ENCODE measurements at regions of chr14 and their contacts with region 1.

Region 1: GRCh38 chr14:59964251-59965007 is 44.5 kb downstream of the LRRC9 start:
- DNase-seq: no peak
- H3K4me3 ChIP-seq: peak overlapping the region; percentile 53 to 57; a peak in 2 of 4 replicates
- H3K27ac ChIP-seq: no peak overlapping the region
- H3K4me1 ChIP-seq: no peaks in the 10 kb centered on the region
- H3K27me3 ChIP-seq: no peaks in the 10 kb centered on the region
- CTCF ChIP-seq: no peak
- EP300 ChIP-seq: no peak
- RAD21 ChIP-seq: no peak

Region 2: DNA sequence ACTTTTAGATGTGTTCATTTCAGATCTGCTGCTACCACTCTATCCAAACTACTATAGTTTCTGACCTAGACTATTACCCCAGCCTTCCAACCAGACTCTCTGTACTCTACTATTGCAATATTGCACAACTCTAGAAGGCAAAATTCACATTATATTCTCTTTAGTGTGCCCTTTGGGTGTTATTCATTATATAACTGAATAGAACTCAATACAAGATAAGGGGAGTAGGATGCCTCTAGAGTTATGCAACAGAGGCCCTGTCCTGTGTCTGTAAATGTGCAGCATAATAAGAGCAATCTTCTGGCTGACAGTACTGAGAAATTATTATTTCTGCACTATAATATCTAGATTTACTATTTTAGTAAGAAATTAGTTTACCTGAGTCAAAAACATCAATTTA is 18.6 kb after region 1 on chr14:
- CTCF ChIA-PET with region 1: interaction called, 12 read pairs
- POLR2A ChIA-PET with region 1: no interaction called
- DNase-seq: no peak
- H3K4me3 ChIP-seq: no peak overlapping the region
- H3K27ac ChIP-seq: no peak overlapping the region
- H3K4me1 ChIP-seq: no peaks in the 10 kb centered on the region
- H3K27me3 ChIP-seq: no peaks in the 10 kb centered on the region
- CTCF ChIP-seq: no peak
- EP300 ChIP-seq: no peak
- RAD21 ChIP-seq: no peak

Region 3: DNA sequence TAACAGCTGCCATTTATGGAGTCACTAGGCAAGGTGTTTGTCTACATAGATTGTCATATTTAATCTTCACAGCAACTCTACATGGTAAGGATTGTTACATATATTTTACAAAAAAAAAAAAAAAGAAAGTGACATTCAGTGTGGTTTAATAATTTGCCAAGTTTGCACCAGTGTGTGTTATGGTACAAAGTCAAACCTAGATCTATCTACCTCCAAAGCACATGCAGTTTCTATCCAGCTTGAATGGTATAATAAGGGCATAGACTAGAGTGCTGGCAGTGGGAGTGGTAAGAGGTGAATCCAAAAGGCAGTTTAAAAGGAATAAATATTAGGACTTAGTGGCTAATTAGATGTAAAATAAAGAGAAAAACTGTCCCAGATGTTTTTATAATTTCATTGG is 61.1 kb after region 1 on chr14:
- CTCF ChIA-PET with region 1: no interaction called
- POLR2A ChIA-PET with region 1: no interaction called
- DNase-seq: no peak
- H3K4me3 ChIP-seq: no peak overlapping the region
- H3K27ac ChIP-seq: no peak overlapping the region
- H3K4me1 ChIP-seq: no peaks in the 10 kb centered on the region
- H3K27me3 ChIP-seq: no peaks in the 10 kb centered on the region
- CTCF ChIP-seq: no peak
- EP300 ChIP-seq: no peak
- RAD21 ChIP-seq: no peak

Region 4: GRCh38 chr14:60184146-60184904 is 219.9 kb after region 1 on chr14:
- CTCF ChIA-PET with region 1: interaction called, 110 read pairs
- POLR2A ChIA-PET with region 1: no interaction called
- DNase-seq: no peak
- H3K4me3 ChIP-seq: peak overlapping the region; percentile 40 to 61
- H3K27ac ChIP-seq: peak overlapping the region in 1 of 2 experiments; percentile 68; a peak in 2 of 4 replicates
- H3K4me1 ChIP-seq: peaks cover 6 to 8% of the 10 kb centered on the region in 2 experiments; a peak in 2 of 4 replicates
- H3K27me3 ChIP-seq: no peaks in the 10 kb centered on the region
- CTCF ChIP-seq: peak; percentile 90
- EP300 ChIP-seq: no peak
- RAD21 ChIP-seq: peak; percentile 93

Region 5: GRCh38 chr14:60199321-60199720 is 234.9 kb after region 1 on chr14:
- CTCF ChIA-PET with region 1: interaction called, 12 read pairs
- POLR2A ChIA-PET with region 1: no interaction called
- DNase-seq: no peak
- H3K4me3 ChIP-seq: no peak overlapping the region
- H3K27ac ChIP-seq: no peak overlapping the region
- H3K4me1 ChIP-seq: peaks cover 0 to 4% of the 10 kb centered on the region in 2 experiments; a peak in 2 of 4 replicates
- H3K27me3 ChIP-seq: no peaks in the 10 kb centered on the region
- CTCF ChIP-seq: no peak
- EP300 ChIP-seq: no peak
- RAD21 ChIP-seq: no peak

Measured in SK-N-SH (cell line).